ENCODE measurements at regions of chr1 and their contacts with region 1.

Region 1: DNA sequence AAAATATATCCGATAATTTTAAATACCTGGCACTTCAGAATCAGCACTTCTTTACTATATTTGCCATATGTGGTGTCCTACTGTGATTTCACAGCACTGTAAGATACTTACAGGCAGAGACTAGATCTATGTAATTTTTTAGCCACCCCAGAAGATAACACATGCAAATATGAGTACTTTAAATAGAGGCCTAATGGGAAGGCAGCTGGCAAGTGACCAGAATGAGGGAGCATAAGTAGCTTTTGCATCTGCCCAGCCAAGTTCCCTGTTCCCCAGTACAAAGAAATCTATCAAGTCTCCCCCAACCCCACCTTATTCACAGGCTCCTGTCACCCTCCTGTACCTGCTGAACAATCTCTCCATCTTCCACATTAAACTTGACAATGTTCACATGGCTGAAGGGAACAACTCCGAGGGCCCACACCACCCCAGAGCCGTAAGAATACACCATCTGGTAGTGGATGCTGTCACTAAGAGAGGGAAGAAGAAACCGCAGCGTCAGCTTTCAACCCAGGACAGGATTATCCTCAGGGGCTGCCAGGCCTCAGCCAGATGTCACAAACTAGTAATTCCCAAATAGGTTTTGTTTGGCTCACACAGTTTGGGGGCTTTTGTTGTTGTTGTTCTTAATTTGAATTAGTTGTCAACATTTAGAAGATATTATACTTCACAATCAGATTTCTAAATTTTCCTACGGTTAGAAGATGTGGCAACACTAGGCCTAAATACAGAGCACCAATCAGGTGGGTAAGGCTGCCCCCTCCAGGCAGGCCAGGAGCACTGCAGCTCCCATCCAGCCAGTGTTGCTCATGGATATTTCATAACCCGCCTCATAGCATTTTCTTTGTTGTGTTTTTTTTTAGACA is 10.4 kb downstream of the EMC1 start:
- DNase-seq: peak; percentile 36 to 79 (median 68)
- ATAC-seq: peak; percentile 100
- H3K4me3 ChIP-seq: no peak overlapping the region
- H3K4me3 Mint-ChIP-seq: no peak overlapping the region
- H3K27ac ChIP-seq: peak overlapping the region; percentile 36
- H3K27ac Mint-ChIP-seq: peak overlapping the region in 5 of 9 donors; percentile 28 to 62 (median 56)
- H3K4me1 ChIP-seq: no peaks in the 10 kb centered on the region
- H3K4me1 Mint-ChIP-seq: peaks cover 0 to 4% (median 0%) of the 10 kb centered on the region in 7 donors
- H3K27me3 ChIP-seq: no peaks in the 10 kb centered on the region
- H3K27me3 Mint-ChIP-seq: no peaks in the 10 kb centered on the region

Region 2: DNA sequence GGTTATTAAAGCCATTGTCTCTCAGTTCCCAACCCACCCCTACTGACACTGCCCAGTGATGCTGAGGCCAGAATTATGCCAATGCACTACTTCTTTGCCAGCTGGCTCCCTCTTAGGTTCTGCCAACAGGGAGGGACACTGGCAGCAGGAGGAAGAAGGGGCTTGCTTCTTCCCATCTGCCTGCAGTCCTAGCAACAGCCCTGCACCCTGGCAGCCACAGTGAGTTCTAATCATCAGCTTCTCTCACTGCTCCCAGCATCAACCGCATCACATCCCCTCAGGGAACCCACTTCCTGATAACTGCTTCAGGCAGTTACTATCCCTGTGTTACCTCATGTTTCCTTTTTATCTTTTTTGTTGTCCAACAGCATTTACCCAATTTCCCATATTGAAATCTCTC is 117.1 kb before region 1 on chr1:
- CTCF ChIA-PET with region 1: no interaction called
- POLR2A ChIA-PET with region 1: no interaction called
- intact Hi-C with region 1: loop called in 1 of 2 experiments (anchors 5 kb)
- DNase-seq: peak in 3 of 9 donors; percentile 15 to 29 (median 18)
- ATAC-seq: peak; percentile 84
- H3K4me3 ChIP-seq: no peak overlapping the region
- H3K4me3 Mint-ChIP-seq: peak overlapping the region in 7 of 10 donors; percentile 0 to 72 (median 41)
- H3K27ac ChIP-seq: peak overlapping the region; percentile 25
- H3K27ac Mint-ChIP-seq: peak overlapping the region in 8 of 9 donors; percentile 56 to 87 (median 74)
- H3K4me1 ChIP-seq: peaks cover 12 to 22% of the 10 kb centered on the region in 2 donors
- H3K4me1 Mint-ChIP-seq: peaks cover 0 to 38% (median 24%) of the 10 kb centered on the region in 7 donors
- H3K27me3 ChIP-seq: no peaks in the 10 kb centered on the region
- H3K27me3 Mint-ChIP-seq: no peaks in the 10 kb centered on the region

Region 3: GRCh38 chr1:19179597-19180264 is 61.2 kb before region 1 on chr1:
- CTCF ChIA-PET with region 1: interaction called, 15 read pairs
- POLR2A ChIA-PET with region 1: no interaction called
- intact Hi-C with region 1: loop called (anchors 1 kb)
- DNase-seq: peak in 7 of 9 donors; percentile 38 to 70 (median 49)
- ATAC-seq: peak; percentile 87
- H3K4me3 ChIP-seq: no peak overlapping the region
- H3K4me3 Mint-ChIP-seq: peak overlapping the region; percentile 16 to 64 (median 54)
- H3K27ac ChIP-seq: peak overlapping the region; percentile 45
- H3K27ac Mint-ChIP-seq: peak overlapping the region; percentile 75 to 95 (median 89)
- H3K4me1 ChIP-seq: peaks cover 0 to 19% of the 10 kb centered on the region in 2 donors
- H3K4me1 Mint-ChIP-seq: peaks cover 15 to 42% (median 31%) of the 10 kb centered on the region in 7 donors
- H3K27me3 ChIP-seq: no peaks in the 10 kb centered on the region
- H3K27me3 Mint-ChIP-seq: no peaks in the 10 kb centered on the region